Vagina (tissue), 2 donors: ENCODE measurements at regions of chr9 and their contacts with region 1.

Region 1: GRCh38 chr9:81689343-81690190 is at the start of gene TLE1:
- DNase-seq: peak; percentile 98 to 100
- H3K4me3 ChIP-seq: peak within 1 kb of the TSS; percentile 80 to 85
- H3K27ac ChIP-seq: peak within 1 kb of the TSS; percentile 87
- H3K4me1 ChIP-seq: peaks cover 30% of the 10 kb centered on the region
- H3K27me3 ChIP-seq: no peaks in the 10 kb centered on the region
- CTCF ChIP-seq: peak in 1 of 3 experiments; percentile 10
- POLR2A ChIP-seq: peak in 1 of 2 donors; percentile 93
- total RNA-seq, gene TLE1: 75.1 TPM

Region 2: GRCh38 chr9:81529556-81530195 is 159.9 kb before region 1 on chr9:
- intact Hi-C with region 1: loop called (anchors 10 kb)
- DNase-seq: no peak
- H3K4me3 ChIP-seq: no peak overlapping the region
- H3K27ac ChIP-seq: no peak overlapping the region
- H3K4me1 ChIP-seq: no peaks in the 10 kb centered on the region
- H3K27me3 ChIP-seq: no peaks in the 10 kb centered on the region
- CTCF ChIP-seq: no peak
- POLR2A ChIP-seq: no peak

Region 3: GRCh38 chr9:81592887-81593266 is 96.7 kb before region 1 on chr9:
- intact Hi-C with region 1: loop called (anchors 10 kb)
- DNase-seq: no peak
- H3K4me3 ChIP-seq: no peak overlapping the region
- H3K27ac ChIP-seq: no peak overlapping the region
- H3K4me1 ChIP-seq: peaks cover under 1% of the 10 kb centered on the region
- H3K27me3 ChIP-seq: no peaks in the 10 kb centered on the region
- CTCF ChIP-seq: no peak
- POLR2A ChIP-seq: no peak

Region 4: GRCh38 chr9:81609782-81610739 is 79.5 kb before region 1 on chr9:
- intact Hi-C with region 1: loop called (anchors 5 kb)
- DNase-seq: no peak
- H3K4me3 ChIP-seq: no peak overlapping the region
- H3K27ac ChIP-seq: no peak overlapping the region
- H3K4me1 ChIP-seq: peaks cover 22% of the 10 kb centered on the region
- H3K27me3 ChIP-seq: no peaks in the 10 kb centered on the region
- CTCF ChIP-seq: no peak
- POLR2A ChIP-seq: no peak

Region 5: GRCh38 chr9:81632599-81632998 is 57.0 kb before region 1 on chr9:
- intact Hi-C with region 1: no loop called
- DNase-seq: no peak
- H3K4me3 ChIP-seq: no peak overlapping the region
- H3K27ac ChIP-seq: no peak overlapping the region
- H3K4me1 ChIP-seq: no peaks in the 10 kb centered on the region
- H3K27me3 ChIP-seq: no peaks in the 10 kb centered on the region
- CTCF ChIP-seq: no peak
- POLR2A ChIP-seq: no peak

Region 6: GRCh38 chr9:81848472-81848871 is 158.9 kb after region 1 on chr9:
- intact Hi-C with region 1: loop called (anchors 10 kb)
- DNase-seq: no peak
- H3K4me3 ChIP-seq: no peak overlapping the region
- H3K27ac ChIP-seq: no peak overlapping the region
- H3K4me1 ChIP-seq: no peaks in the 10 kb centered on the region
- H3K27me3 ChIP-seq: no peaks in the 10 kb centered on the region
- CTCF ChIP-seq: peak in 1 of 3 experiments; percentile 41
- POLR2A ChIP-seq: no peak